ENCODE measurements at regions of chr3 and their contacts with region 1.

Region 1: DNA sequence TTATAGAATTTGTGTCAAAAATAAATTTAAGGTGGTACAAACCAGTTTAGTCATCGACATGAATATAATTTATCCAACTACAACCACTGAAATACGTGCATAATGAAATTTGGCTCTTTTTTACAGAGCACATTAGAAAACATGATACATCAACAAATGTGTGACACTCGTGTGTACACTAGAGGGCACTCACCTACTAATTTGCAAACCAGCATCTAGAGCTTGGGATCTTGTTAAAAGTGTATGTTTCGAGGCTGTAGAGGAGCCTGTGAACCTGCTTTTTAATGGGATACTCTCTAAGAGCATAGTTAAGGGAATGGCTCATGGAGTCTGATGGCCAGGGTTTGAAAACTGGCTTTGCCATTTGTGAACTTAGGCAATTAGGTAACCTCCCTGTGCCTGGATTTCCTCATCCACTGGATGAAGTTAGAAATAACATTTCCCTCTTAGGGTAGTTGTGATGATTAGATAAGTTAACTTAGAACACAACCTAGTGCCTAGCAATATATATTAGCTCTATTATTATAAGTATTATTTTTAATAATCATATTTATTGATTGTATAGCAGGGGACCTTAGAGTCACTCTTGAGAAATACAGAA is 8.8 kb upstream of the CPOX start:
- H3K4me3 ChIP-seq: no peak overlapping the region
- H3K27ac ChIP-seq: no peak overlapping the region
- H3K4me1 ChIP-seq: no peaks in the 10 kb centered on the region
- CTCF ChIP-seq: peak; percentile 23; the same call in 1 of the 2 replicates

Region 2: DNA sequence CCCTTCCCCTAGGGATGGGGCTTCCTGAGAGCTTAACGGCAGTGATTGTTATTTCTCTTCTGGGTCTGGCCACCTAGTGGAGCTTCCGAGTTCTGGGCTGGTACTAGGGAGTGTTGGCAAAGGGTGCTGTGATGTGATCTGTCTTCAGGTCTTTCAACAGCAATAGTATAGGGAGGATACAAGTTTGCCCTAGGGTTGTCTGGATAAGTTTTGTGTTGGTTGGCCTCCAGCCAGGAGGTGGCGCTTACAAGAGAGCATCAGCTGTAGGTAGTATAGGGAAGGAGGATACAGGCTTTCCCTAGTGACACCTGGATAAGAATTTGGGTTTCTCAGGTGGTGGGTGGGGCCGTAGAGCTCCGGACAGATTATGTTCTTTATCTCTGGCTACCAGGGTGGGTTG is 10.4 kb after region 1 on chr3:
- CTCF ChIA-PET with region 1: interaction called, 15 read pairs
- POLR2A ChIA-PET with region 1: no interaction called
- H3K4me3 ChIP-seq: no peak overlapping the region
- H3K27ac ChIP-seq: no peak overlapping the region
- H3K4me1 ChIP-seq: no peaks in the 10 kb centered on the region
- CTCF ChIP-seq: no peak

Region 3: GRCh38 chr3:98994128-98994762 is 392.1 kb after region 1 on chr3:
- CTCF ChIA-PET with region 1: interaction called, 15 read pairs
- POLR2A ChIA-PET with region 1: no interaction called
- H3K4me3 ChIP-seq: no peak overlapping the region
- H3K27ac ChIP-seq: no peak overlapping the region
- H3K4me1 ChIP-seq: no peaks in the 10 kb centered on the region
- CTCF ChIP-seq: no peak